K562 (cell line): ENCODE measurements at regions of chr10 and their contacts with region 1.

Region 1: DNA sequence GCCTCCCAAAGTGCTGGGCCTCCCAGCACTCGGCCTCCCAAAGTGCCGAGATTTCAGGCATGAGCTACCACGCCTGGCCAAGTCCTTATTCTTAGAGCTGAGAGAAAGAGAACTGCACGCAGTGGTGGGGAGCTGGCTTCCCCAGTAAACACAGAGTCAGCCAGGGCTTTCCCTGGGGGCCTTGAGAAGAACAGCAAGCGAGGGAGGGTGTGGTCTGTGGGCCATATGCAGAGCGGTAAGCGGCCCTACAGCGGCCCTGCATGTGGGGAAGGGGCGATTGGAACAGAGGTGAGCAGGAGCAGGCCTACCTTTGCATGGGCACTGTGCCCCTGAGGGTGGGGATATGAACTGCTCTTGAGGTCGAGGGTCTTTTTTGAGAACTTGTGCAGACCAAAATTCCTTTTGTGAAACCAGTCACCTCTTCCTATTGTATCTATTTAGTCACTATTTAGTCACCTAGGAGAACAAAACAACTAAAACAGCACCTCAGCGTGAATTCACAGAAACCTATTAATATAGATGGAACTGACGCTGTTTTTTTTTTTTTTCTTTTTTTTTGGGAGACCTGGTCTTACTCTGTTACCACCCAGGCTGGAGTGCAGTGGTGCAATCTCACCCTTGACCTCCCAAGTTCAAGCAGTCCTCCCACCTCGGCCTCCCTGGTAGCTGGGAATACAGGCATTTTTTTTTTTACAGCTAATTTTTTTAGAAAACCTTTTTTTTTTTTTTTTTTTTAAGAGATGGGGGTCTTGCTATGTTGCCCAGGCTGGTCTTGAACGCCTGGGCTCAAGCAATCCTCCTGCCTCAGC is 36.9 kb upstream of the SH2D4B start:
- DNase-seq: peak in 2 of 4 experiments; percentile 47 to 64
- ATAC-seq: no peak
- H3K4me3 ChIP-seq: no peak overlapping the region
- H3K27ac ChIP-seq: peak overlapping the region; percentile 29; the same call in 2 of the 3 replicates
- H3K4me1 ChIP-seq: peaks cover 82 to 83% of the 10 kb centered on the region in 2 experiments
- H3K27me3 ChIP-seq: no peaks in the 10 kb centered on the region
- CTCF ChIP-seq: 0 out of 6 replicates have a peak, but pooled peaks of 1 of the 3 experiments have one; percentile 5
- EP300 ChIP-seq: no peak
- POLR2A ChIP-seq: no peak
- RAD21 ChIP-seq: no peak

Region 2: DNA sequence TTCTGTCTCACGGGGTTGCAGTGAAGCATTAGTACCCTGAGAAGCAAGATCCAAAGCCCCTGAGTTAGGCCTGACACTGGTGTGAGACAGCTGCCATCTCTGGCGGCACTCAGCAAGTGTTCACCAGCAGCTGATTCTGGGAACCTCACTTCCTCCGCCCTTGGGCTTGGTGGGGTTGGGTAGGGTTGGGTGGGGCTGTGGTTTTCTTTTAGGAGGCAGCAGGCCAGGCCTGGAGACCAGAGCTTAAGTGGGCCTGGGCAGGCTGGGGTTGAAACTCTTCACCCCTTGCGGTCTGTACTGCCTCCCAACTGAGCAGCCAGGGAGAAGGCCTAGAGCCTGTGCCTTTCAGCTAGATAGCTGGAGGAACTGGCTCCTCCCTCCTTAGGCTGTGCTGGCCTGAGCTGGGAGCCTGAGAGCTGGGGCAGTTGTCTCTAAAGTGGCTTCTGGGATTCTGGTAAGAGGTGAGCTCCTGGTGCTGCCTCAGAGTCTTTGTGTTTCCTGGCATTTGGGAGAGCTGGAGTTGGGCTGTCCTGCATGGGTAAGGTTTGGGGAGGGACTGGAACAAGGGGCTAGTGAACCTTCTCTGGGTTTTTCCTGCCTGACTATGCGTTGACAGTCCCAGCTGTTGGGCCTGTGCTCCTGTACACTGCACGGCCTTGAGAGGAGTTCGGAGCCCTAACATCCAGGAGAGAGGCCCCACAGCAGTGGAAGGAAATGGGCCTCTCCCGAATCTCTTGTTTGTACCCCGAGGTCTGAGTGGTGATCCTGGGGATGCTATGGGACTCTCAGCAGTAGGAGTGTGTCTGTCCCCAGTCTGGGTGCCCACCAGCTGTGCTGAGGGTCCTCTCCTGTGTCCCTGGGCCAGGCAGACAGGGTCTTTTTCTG is 41.5 kb before region 1 on chr10:
- CTCF ChIA-PET with region 1: no interaction called
- POLR2A ChIA-PET with region 1: interaction called, 9 read pairs
- in situ Hi-C with region 1: no loop called
- intact Hi-C with region 1: loop called (anchors 2 kb)
- DNase-seq: peak; percentile 84 to 96 (median 90)
- ATAC-seq: peak; percentile 83
- H3K4me3 ChIP-seq: peak overlapping the region; percentile 3; the same call in 1 of the 2 replicates
- H3K27ac ChIP-seq: peak overlapping the region; percentile 72
- H3K4me1 ChIP-seq: peaks cover 80 to 82% of the 10 kb centered on the region in 2 experiments
- H3K27me3 ChIP-seq: no peaks in the 10 kb centered on the region
- CTCF ChIP-seq: peak; percentile 29 to 41 (median 31); a peak in 3 of 6 replicates
- EP300 ChIP-seq: no peak; the same call in 1 of the 2 replicates
- POLR2A ChIP-seq: no peak
- RAD21 ChIP-seq: 0 out of 4 replicates have a peak, but pooled peaks have one; percentile 8 to 12

Region 3: GRCh38 chr10:80487791-80488538 is 12.8 kb before region 1 on chr10:
- CTCF ChIA-PET with region 1: interaction called, 3 read pairs
- POLR2A ChIA-PET with region 1: interaction called, 12 read pairs
- in situ Hi-C with region 1: no loop called
- intact Hi-C with region 1: no loop called
- DNase-seq: peak in 2 of 4 experiments; percentile 55 to 63
- ATAC-seq: peak; percentile 69
- H3K4me3 ChIP-seq: no peak overlapping the region
- H3K27ac ChIP-seq: peak overlapping the region; percentile 14; the same call in 1 of the 3 replicates
- H3K4me1 ChIP-seq: peaks cover 44 to 51% of the 10 kb centered on the region in 2 experiments
- H3K27me3 ChIP-seq: no peaks in the 10 kb centered on the region
- CTCF ChIP-seq: no peak
- EP300 ChIP-seq: no peak
- POLR2A ChIP-seq: no peak
- RAD21 ChIP-seq: no peak

Region 4: GRCh38 chr10:80739963-80740715 is 239.4 kb after region 1 on chr10:
- CTCF ChIA-PET with region 1: no interaction called
- POLR2A ChIA-PET with region 1: no interaction called
- in situ Hi-C with region 1: no loop called
- intact Hi-C with region 1: no loop called
- DNase-seq: peak; percentile 38 to 85 (median 64)
- ATAC-seq: peak; percentile 85
- H3K4me3 ChIP-seq: peak overlapping the region; percentile 3; the same call in 1 of the 2 replicates
- H3K27ac ChIP-seq: no peak overlapping the region
- H3K4me1 ChIP-seq: peaks cover 11 to 28% of the 10 kb centered on the region in 2 experiments
- H3K27me3 ChIP-seq: no peaks in the 10 kb centered on the region
- CTCF ChIP-seq: no peak
- EP300 ChIP-seq: 0 out of 2 replicates have a peak, but pooled peaks have one; percentile 18
- POLR2A ChIP-seq: no peak
- RAD21 ChIP-seq: no peak